ENCODE measurements at regions of chr13 and their contacts with region 1.

Region 1: GRCh38 chr13:41916173-41916954 is 44.5 kb downstream of the VWA8 start:
- DNase-seq: no peak
- ATAC-seq: peak; percentile 89
- H3K4me3 Mint-ChIP-seq: peak overlapping the region; percentile 39
- H3K27ac Mint-ChIP-seq: peak overlapping the region; percentile 13
- H3K4me1 Mint-ChIP-seq: peaks cover 32% of the 10 kb centered on the region
- H3K27me3 Mint-ChIP-seq: no peaks in the 10 kb centered on the region
- CTCF ChIP-seq: no peak

Region 2: GRCh38 chr13:41178040-41178439 is 738.3 kb before region 1 on chr13:
- CTCF ChIA-PET with region 1: no interaction called
- POLR2A ChIA-PET with region 1: no interaction called
- intact Hi-C with region 1: no loop called
- DNase-seq: no peak
- ATAC-seq: no peak
- H3K4me3 Mint-ChIP-seq: no peak overlapping the region
- H3K27ac Mint-ChIP-seq: no peak overlapping the region
- H3K4me1 Mint-ChIP-seq: no peaks in the 10 kb centered on the region
- H3K27me3 Mint-ChIP-seq: no peaks in the 10 kb centered on the region
- CTCF ChIP-seq: no peak

Region 3: DNA sequence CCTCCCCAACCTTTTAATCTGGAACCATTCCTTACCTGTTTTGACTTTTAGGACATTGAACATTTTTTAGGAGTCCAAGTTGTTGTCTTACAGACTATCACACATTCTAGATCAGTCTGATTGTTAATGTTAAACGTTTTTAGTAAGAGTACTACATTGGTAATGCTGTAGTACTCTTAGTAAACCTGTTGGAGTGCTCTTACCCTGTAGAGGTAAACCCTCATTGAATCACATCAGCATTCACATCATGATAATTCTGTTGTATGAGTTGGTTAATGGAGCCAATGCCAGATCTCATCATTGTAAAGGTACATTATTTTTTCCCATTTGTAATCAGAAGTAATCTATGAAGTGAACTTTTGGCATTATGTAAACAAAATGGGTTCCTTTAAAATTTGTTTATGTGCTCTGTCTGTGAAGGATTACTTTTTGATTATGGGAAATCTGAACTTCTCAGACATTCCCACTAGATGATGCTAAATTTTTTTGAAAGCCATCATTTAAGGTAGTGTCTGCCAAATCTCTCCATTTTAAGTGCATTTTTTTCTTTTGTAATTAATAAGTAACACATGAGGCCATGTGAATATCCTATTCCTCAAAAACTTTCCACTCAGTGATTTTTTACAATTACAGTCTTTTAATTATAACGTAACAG is 10.6 kb before region 1 on chr13:
- CTCF ChIA-PET with region 1: no interaction called
- POLR2A ChIA-PET with region 1: no interaction called
- intact Hi-C with region 1: loop called (anchors 1 kb)
- DNase-seq: no peak
- ATAC-seq: peak; percentile 78
- H3K4me3 Mint-ChIP-seq: no peak overlapping the region
- H3K27ac Mint-ChIP-seq: no peak overlapping the region
- H3K4me1 Mint-ChIP-seq: no peaks in the 10 kb centered on the region
- H3K27me3 Mint-ChIP-seq: no peaks in the 10 kb centered on the region
- CTCF ChIP-seq: peak; percentile 30

Region 4: GRCh38 chr13:41960639-41961465 is 44.5 kb after region 1 on chr13 and contains the start of gene VWA8:
- CTCF ChIA-PET with region 1: no interaction called
- POLR2A ChIA-PET with region 1: interaction called, 7 read pairs
- intact Hi-C with region 1: loop called (anchors 2 kb)
- DNase-seq: peak; percentile 79
- ATAC-seq: peak; percentile 98
- H3K4me3 Mint-ChIP-seq: peak within 1 kb of the TSS; percentile 91
- H3K27ac Mint-ChIP-seq: peak within 1 kb of the TSS; percentile 66
- H3K4me1 Mint-ChIP-seq: peaks cover 26% of the 10 kb centered on the region
- H3K27me3 Mint-ChIP-seq: peaks cover 4% of the 10 kb centered on the region
- CTCF ChIP-seq: no peak
- total RNA-seq, gene VWA8: 16.5 and 21.7 TPM in 2 replicates

Region 5: DNA sequence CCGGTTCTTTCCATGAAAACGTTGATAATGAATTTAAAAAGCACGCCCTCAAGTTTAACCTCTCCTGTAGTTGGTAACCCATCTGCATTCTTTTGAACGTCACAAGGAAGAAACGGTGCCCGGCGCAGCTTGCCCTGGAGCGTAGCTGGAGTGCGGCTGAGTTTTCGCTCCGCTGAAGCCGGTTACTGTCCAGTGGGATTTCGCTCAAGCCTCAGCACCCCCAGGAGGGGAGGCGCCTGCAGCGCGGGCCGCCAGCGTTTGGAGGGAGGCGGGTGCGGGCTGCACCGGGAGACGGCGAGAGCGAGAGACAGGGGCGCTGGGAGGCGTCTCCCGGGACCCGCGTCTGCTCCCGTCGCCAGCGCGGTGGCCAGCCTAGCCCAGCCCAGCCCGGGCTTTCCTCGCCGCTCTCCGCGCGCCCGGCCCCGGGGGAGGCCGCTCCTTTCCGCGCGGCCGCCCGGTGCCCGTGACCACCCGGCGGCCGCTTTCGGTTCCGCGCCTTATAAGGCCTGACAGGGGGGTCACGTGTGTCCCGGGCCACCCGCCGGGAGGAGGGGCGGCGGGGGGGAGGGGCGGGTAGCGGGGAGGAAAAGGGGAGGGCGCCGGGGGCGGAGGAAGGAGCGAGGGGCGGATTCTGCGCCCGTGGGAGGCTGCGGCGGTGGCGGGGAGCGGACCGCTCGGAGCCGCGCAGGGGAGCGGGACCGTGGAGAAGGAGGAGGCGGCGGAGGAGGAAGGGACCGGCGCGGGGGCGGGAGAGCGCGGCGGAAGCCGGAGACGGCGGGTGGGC is 123.8 kb after region 1 on chr13:
- CTCF ChIA-PET with region 1: no interaction called
- POLR2A ChIA-PET with region 1: no interaction called
- intact Hi-C with region 1: loop called (anchors 2 kb)
- DNase-seq: peak; percentile 78
- ATAC-seq: peak; percentile 82
- H3K4me3 Mint-ChIP-seq: peak overlapping the region; percentile 90
- H3K27ac Mint-ChIP-seq: peak overlapping the region; percentile 84
- H3K4me1 Mint-ChIP-seq: peaks cover 16% of the 10 kb centered on the region
- H3K27me3 Mint-ChIP-seq: peaks cover 6% of the 10 kb centered on the region
- CTCF ChIP-seq: no peak

Region 6: DNA sequence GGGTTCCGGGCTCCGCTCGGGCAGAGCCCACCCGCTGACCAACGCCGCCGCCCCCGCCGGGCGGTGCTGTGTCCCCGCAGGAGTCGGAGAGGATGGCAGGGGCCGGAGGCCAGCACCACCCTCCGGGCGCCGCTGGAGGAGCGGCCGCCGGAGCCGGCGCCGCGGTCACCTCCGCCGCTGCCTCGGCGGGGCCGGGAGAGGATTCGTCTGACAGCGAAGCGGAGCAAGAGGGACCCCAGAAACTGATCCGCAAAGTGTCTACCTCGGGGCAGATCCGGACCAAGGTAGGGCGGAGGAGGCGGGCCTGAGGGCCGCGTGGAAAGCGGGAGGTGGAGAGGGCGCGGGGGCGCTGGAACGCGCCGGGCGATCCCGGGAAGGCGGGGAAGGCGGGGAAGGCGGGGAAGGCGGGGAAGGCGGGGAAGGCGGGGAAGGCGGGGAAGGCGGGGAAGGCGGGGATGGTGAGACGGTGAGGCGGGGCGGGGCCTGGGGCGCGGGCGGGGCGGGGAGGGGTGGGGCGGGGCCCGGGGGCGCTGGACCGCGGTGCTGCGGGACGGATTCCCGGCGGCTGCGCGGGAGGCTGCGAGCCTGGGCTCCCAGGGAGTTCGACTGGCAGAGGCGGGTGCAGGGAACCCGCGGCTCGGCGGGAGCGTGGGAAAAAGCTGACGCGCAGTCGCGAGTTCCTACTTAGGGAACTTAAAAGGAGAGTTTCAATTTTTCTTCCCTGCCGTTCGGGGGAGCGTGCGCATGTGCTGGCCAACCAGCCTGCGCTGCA is 132.5 kb after region 1 on chr13:
- CTCF ChIA-PET with region 1: no interaction called
- POLR2A ChIA-PET with region 1: no interaction called
- intact Hi-C with region 1: loop called (anchors 2 kb)
- DNase-seq: peak; percentile 50
- ATAC-seq: peak; percentile 76
- H3K4me3 Mint-ChIP-seq: peak overlapping the region; percentile 85
- H3K27ac Mint-ChIP-seq: no peak overlapping the region
- H3K4me1 Mint-ChIP-seq: peaks cover 12% of the 10 kb centered on the region
- H3K27me3 Mint-ChIP-seq: peaks cover 34% of the 10 kb centered on the region
- CTCF ChIP-seq: no peak

Measured in activated B cell treated with CpG ODN at 0.5 μM for 24 hours (primary cell).